A549 (cell line): ENCODE measurements at regions of chr16 and their contacts with region 1.

Region 1: DNA sequence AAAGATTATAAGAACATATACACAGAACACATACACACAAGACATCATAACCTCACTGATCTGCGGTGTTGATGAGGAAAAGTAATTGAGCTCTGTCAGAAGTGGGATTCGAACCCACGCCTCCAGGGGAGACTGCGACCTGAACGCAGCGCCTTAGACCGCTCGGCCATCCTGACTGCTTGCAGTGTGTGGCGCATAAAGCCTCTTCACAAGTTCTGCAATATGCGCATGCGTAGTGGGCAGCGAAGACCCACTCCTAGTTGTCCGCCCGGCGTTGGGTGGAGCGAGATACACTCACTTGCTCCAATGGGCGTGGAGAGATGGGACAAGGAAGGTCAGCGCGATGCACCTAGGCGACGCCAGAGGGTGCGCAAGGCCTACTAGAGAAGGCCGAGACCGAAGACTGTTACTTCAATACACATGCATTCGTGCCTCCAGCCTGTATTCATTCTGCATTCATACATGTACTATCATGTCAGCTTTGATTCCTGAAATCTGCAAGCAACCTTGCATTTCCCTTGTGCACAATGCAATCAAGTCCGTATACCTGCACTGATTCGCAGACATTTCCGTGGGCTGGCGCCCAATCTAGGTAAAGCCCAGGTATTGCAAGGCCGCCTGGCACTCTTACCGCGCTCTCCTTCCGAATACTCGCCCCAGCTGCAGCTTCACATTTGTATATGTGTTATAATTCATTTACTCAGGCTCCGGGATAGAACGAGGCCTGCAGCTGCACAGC is 16.1 kb upstream of the PLLP start:
- DNase-seq: peak; percentile 93 to 99
- ATAC-seq: peak; percentile 77 to 83
- H3K4me3 ChIP-seq: peak overlapping the region; percentile 37
- H3K27ac ChIP-seq: peak overlapping the region; percentile 42 to 70; a peak in 4 of 6 replicates
- H3K4me1 ChIP-seq: peaks cover 23% of the 10 kb centered on the region
- CTCF ChIP-seq: peak; percentile 95
- EP300 ChIP-seq: no peak
- POLR2A ChIP-seq: no peak
- RAD21 ChIP-seq: peak; percentile 99 to 100

Region 2: GRCh38 chr16:57226701-57227621 is 73.6 kb before region 1 on chr16:
- CTCF ChIA-PET with region 1: no interaction called
- POLR2A ChIA-PET with region 1: no interaction called
- DNase-seq: no peak
- ATAC-seq: no peak
- H3K4me3 ChIP-seq: no peak overlapping the region
- H3K27ac ChIP-seq: no peak overlapping the region
- H3K4me1 ChIP-seq: no peaks in the 10 kb centered on the region
- CTCF ChIP-seq: no peak
- EP300 ChIP-seq: no peak
- POLR2A ChIP-seq: no peak
- RAD21 ChIP-seq: no peak

Region 3: DNA sequence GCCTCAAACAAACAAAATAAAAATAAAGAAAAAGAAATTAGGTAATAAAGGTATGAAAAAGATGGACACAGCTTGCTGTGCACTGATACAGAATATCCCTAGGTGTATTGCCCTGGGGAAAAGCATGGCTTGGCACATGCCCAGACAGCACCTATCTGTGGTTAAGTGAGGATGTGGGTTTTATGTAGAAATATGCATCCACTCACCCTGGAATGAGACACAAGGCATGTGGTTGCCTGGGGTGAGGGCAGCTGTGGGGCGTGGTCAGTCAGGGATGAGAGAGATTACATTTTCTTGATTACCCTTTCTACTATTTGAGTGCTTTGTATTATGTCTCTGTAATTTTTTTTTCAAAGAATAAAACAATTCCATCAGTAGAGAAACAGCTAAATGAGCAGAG is 23.0 kb before region 1 on chr16:
- CTCF ChIA-PET with region 1: interaction called, 13 read pairs
- POLR2A ChIA-PET with region 1: no interaction called
- DNase-seq: peak; percentile 36 to 58
- ATAC-seq: peak; percentile 55 to 58; a peak in 4 of 6 replicates
- H3K4me3 ChIP-seq: no peak overlapping the region
- H3K27ac ChIP-seq: peak overlapping the region in 1 of 2 experiments; percentile 36; a peak in 2 of 6 replicates
- H3K4me1 ChIP-seq: peaks cover 28% of the 10 kb centered on the region
- CTCF ChIP-seq: no peak
- EP300 ChIP-seq: no peak
- POLR2A ChIP-seq: no peak
- RAD21 ChIP-seq: no peak

Region 4: DNA sequence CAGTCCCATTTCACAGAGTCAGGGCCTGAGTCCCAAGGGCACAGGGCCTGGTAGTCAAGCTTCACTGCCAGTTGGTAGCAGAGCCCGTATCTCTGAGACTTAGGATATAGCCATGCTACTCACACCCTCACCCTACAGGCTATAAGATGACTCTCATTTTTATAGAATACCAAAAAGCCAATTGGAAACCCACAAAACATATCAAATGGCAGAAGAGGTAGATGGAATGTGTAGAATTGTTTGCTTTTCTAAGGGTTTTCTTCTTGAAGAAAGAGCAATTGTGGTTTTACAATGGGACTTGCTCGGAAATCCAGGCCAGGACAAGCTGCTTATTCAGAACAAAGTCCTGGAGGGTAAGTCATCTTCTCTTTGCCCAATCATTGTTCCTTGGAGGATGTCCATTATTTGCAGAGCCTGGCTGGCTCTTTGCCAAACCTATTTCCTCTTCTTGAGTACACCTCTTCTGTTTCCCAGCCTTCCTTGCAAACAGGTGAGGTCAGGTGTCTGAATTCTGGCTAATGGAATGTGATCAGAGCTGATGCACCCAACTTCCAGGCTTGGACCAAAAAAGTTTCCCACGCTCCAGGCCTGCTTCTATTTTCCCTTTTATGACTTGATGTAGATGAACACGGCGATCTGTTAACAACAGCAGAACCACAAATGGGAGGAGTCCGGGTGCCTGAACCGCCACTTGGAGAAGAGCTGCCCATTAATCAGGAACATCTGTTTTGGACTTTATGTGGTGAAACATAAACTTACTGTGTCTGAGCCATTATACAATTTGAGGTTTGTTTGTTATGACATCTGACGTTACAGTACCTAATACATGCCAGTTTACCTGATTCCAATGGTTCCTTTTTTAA is 41.1 kb after region 1 on chr16:
- CTCF ChIA-PET with region 1: interaction called, 11 read pairs
- POLR2A ChIA-PET with region 1: no interaction called
- DNase-seq: peak in 1 of 2 experiments; percentile 58
- ATAC-seq: no peak
- H3K4me3 ChIP-seq: no peak overlapping the region
- H3K27ac ChIP-seq: peak overlapping the region; percentile 31 to 40; a peak in 2 of 6 replicates
- H3K4me1 ChIP-seq: peaks cover 22% of the 10 kb centered on the region
- CTCF ChIP-seq: no peak
- EP300 ChIP-seq: no peak
- POLR2A ChIP-seq: no peak
- RAD21 ChIP-seq: no peak

Region 5: DNA sequence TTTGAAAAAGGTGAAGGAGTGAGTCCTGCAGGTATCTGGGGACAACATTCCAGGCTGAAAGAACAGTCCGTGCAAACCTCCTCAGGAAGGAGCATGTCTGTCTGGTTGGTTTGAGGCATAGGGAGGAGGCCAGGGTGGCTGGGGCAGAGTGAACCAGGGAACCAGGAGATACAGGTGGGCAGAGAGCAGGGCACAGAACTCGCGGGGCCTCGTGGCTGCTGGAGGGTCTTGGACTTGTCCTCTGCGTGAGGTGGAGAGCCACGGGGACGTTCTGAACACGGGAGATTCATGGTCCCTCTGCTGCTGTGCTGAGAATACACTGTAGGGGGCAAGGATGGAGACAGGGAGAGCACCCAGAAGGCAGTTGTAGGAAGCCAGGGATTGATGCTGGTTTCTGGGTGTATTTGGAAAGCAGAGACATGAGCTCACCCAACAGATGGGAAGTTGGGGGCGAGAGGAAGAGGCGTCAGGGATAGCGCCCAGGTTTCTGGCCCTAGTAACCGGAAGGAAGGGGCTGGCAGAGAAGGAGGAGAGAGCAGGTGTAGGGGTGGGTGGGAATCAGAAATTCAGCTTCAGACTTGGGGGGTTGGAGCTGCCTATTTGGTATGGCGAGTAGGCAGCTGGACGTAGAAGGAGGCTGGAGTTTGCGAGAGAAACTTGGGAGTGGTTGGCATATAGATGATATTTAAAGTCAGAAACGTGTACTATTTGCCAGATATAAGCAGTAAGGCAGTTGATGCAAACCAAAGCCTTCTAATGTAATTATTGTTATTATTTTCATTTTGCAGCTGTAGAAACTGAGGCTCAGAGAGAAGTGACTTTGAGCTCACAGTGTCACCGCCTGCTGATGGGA is 103.6 kb after region 1 on chr16 and contains the start of gene CCL17:
- CTCF ChIA-PET with region 1: interaction called, 16 read pairs
- POLR2A ChIA-PET with region 1: no interaction called
- DNase-seq: no peak
- ATAC-seq: peak; percentile 47 to 53; a peak in 3 of 6 replicates
- H3K4me3 ChIP-seq: no peak within 1 kb of the TSS
- H3K27ac ChIP-seq: no peak within 1 kb of the TSS
- H3K4me1 ChIP-seq: no peaks in the 10 kb centered on the region
- CTCF ChIP-seq: no peak
- EP300 ChIP-seq: no peak
- POLR2A ChIP-seq: no peak
- RAD21 ChIP-seq: no peak
- polyA plus RNA-seq, gene CCL17: not detected in 2 replicates

Region 6: GRCh38 chr16:57462209-57462977 is 161.8 kb after region 1 on chr16 and contains the start of gene POLR2C:
- CTCF ChIA-PET with region 1: interaction called, 15 read pairs
- POLR2A ChIA-PET with region 1: interaction called, 8 read pairs
- DNase-seq: peak; percentile 85 to 91
- ATAC-seq: peak; percentile 93 to 97
- H3K4me3 ChIP-seq: peak within 1 kb of the TSS; percentile 82
- H3K27ac ChIP-seq: peak within 1 kb of the TSS; percentile 93 to 97
- H3K4me1 ChIP-seq: peaks cover 37% of the 10 kb centered on the region
- CTCF ChIP-seq: peak; percentile 82
- EP300 ChIP-seq: no peak
- POLR2A ChIP-seq: peak; percentile 99
- RAD21 ChIP-seq: peak; percentile 39 to 56; a peak in 4 of 5 replicates
- polyA plus RNA-seq, gene POLR2C: 229 and 259 TPM in 2 replicates